Naive thymus-derived CD4-positive, alpha-beta T cell (primary cell): ENCODE measurements at regions of chr10 and their contacts with region 1.

Region 1: DNA sequence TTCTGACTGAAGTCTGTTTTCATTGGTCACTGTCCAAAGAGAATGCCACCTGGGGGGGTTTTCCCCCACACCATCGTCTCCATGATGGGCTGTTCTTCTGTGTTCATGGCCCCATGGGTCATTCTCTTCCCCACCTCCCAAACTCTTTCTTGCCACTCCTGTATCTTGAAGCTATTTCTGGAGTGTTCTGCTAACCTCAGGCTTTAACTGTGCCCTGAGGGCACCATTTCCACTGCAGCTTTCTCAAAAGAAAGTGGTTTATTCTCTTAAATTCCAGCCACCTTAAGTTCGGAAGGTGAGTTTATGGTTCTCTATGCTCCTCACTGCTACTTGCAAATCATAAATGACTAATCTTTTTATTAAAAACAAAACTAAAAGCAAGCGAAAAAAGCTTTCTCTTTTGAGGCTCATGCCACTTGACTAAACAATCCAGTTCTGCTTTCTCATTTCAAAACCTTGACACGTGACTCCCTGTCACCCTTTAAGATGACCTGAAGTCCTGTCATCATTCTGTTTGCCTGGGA is 7.4 kb upstream of the APBB1IP start:
- DNase-seq: no peak
- ATAC-seq: peak; percentile 93
- H3K4me3 ChIP-seq: no peak overlapping the region
- H3K4me3 Mint-ChIP-seq: peak overlapping the region in 8 of 10 donors; percentile 18 to 61 (median 53)
- H3K27ac ChIP-seq: no peak overlapping the region
- H3K27ac Mint-ChIP-seq: peak overlapping the region in 4 of 9 donors; percentile 23 to 89 (median 37)
- H3K4me1 ChIP-seq: peaks cover 0 to 9% of the 10 kb centered on the region in 2 donors
- H3K4me1 Mint-ChIP-seq: peaks cover 13 to 35% (median 21%) of the 10 kb centered on the region in 7 donors
- H3K27me3 ChIP-seq: no peaks in the 10 kb centered on the region
- H3K27me3 Mint-ChIP-seq: no peaks in the 10 kb centered on the region

Region 2: DNA sequence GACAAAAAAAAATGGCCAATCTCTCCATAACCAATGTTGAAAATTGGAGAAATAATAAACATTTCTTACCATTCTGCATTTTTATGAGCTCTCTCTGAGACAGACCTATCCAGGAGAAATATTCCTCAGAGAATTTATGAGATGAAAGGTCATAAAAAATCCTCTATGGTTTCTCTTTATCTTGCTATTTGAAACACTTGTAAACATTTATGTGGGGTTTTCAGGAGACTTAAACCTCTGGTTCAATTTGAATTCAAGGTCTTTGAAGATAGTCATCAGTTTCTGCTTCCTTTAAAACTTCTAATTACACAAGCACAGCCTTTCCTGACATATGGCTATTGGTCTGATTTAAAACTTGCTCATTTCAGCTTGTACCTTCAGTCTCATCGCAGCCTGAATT is 71.0 kb before region 1 on chr10:
- CTCF ChIA-PET with region 1: no interaction called
- POLR2A ChIA-PET with region 1: no interaction called
- intact Hi-C with region 1: loop called in 1 of 2 experiments (anchors 1 kb)
- DNase-seq: no peak
- ATAC-seq: no peak
- H3K4me3 ChIP-seq: no peak overlapping the region
- H3K4me3 Mint-ChIP-seq: no peak overlapping the region
- H3K27ac ChIP-seq: no peak overlapping the region
- H3K27ac Mint-ChIP-seq: no peak overlapping the region
- H3K4me1 ChIP-seq: no peaks in the 10 kb centered on the region
- H3K4me1 Mint-ChIP-seq: peaks cover 0 to 2% (median 0%) of the 10 kb centered on the region in 7 donors
- H3K27me3 ChIP-seq: no peaks in the 10 kb centered on the region
- H3K27me3 Mint-ChIP-seq: peaks cover 0 to 28% (median 0%) of the 10 kb centered on the region in 5 donors

Region 3: GRCh38 chr10:26544932-26545331 is 114.2 kb after region 1 on chr10:
- CTCF ChIA-PET with region 1: no interaction called
- POLR2A ChIA-PET with region 1: no interaction called
- intact Hi-C with region 1: no loop called
- DNase-seq: no peak
- ATAC-seq: no peak
- H3K4me3 ChIP-seq: no peak overlapping the region
- H3K4me3 Mint-ChIP-seq: no peak overlapping the region
- H3K27ac ChIP-seq: peak overlapping the region; percentile 29
- H3K27ac Mint-ChIP-seq: peak overlapping the region in 7 of 9 donors; percentile 43 to 95 (median 72)
- H3K4me1 ChIP-seq: no peaks in the 10 kb centered on the region
- H3K4me1 Mint-ChIP-seq: peaks cover 14 to 38% (median 22%) of the 10 kb centered on the region in 7 donors
- H3K27me3 ChIP-seq: no peaks in the 10 kb centered on the region
- H3K27me3 Mint-ChIP-seq: no peaks in the 10 kb centered on the region